Activated CD4-positive, alpha-beta memory T cell treated with anti-CD3 and anti-CD28 coated beads, Interleukin-2, amount 10 ng/mL, durations not matched to agents 7 days and 5 days (primary cell): ENCODE measurements at regions of chr20 and their contacts with region 1.

Region 1: DNA sequence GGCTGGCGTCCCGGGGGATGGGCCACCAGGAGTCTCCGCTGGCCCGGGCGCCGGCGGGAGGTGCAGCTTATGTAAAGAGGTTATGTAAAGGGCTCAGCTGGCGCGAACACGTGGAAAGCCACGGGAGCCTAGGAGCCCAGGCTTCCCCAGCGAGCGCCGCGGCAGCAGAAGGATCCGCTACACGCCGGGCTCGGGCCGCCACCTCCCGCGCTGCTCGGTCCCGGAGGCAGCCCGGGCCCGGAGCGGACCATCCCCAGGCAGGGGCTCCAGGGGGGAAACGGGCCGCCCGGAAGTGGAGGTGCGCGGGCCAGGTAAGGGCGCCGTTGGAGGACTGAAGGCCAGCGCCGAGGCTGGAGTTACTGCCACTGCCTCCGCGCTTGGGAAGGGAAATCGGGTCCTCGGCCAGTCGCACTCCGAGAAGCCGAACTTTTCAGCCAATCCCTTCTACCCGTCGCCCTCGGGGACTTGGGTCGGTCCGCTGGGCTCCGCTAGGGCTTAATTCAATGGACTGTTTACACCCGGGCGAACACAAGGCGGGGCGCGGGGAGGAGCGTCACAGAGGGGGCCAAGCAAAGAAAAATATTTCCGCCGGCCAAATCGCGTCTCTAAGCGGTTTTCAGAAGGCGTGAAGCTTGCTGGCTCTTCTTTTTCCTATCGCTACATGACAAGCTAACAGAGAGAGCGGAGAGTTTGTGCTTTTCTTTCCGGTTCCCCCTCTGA is 398 bp downstream of the STK35 start:
- DNase-seq: peak; percentile 89
- H3K4me3 Mint-ChIP-seq: peak overlapping the region; percentile 93
- H3K27ac Mint-ChIP-seq: peak overlapping the region; percentile 99
- H3K4me1 Mint-ChIP-seq: peaks cover 46% of the 10 kb centered on the region
- H3K27me3 Mint-ChIP-seq: no peaks in the 10 kb centered on the region

Region 2: GRCh38 chr20:2059411-2059810 is 42.6 kb before region 1 on chr20:
- CTCF ChIA-PET with region 1: no interaction called
- POLR2A ChIA-PET with region 1: no interaction called
- DNase-seq: no peak
- H3K4me3 Mint-ChIP-seq: no peak overlapping the region
- H3K27ac Mint-ChIP-seq: no peak overlapping the region
- H3K4me1 Mint-ChIP-seq: no peaks in the 10 kb centered on the region
- H3K27me3 Mint-ChIP-seq: peaks cover 11% of the 10 kb centered on the region

Region 3: GRCh38 chr20:2114990-2115681 is 13.1 kb after region 1 on chr20:
- CTCF ChIA-PET with region 1: interaction called, 4 read pairs
- POLR2A ChIA-PET with region 1: interaction called, 37 read pairs
- DNase-seq: no peak
- H3K4me3 Mint-ChIP-seq: no peak overlapping the region
- H3K27ac Mint-ChIP-seq: no peak overlapping the region
- H3K4me1 Mint-ChIP-seq: peaks cover 48% of the 10 kb centered on the region
- H3K27me3 Mint-ChIP-seq: no peaks in the 10 kb centered on the region

Region 4: GRCh38 chr20:2246069-2246491 is 144.1 kb after region 1 on chr20:
- CTCF ChIA-PET with region 1: no interaction called
- POLR2A ChIA-PET with region 1: no interaction called
- DNase-seq: no peak
- H3K4me3 Mint-ChIP-seq: no peak overlapping the region
- H3K27ac Mint-ChIP-seq: no peak overlapping the region
- H3K4me1 Mint-ChIP-seq: no peaks in the 10 kb centered on the region
- H3K27me3 Mint-ChIP-seq: peaks cover 21% of the 10 kb centered on the region